ENCODE measurements at regions of chr1 and their contacts with region 1.

Region 1: DNA sequence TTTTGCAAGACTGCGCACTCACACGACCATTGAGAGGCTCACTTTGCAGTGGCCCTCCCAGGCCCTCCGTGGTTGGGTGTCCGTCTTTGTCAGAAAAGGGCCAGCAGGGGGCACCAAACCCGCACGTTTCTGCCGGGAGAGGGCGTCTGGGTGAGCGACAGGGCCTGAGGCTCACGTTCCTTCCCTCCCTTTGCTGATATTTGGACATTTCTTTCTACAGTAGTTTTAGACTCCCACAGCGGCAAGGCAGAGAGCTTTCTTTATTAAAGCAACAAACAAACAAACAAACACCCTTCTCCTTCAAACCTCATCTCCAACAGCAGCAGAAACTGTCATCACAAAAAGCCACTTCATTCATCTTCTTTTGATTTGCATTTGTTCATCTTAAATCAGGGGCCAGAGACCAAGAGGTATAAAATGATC is 79.2 kb upstream of the WDR26 start:
- DNase-seq: peak; percentile 86 to 94 (median 93)
- ATAC-seq: peak; percentile 93
- H3K4me3 ChIP-seq: no peak overlapping the region
- H3K27ac ChIP-seq: no peak overlapping the region
- H3K4me1 ChIP-seq: no peaks in the 10 kb centered on the region
- H3K27me3 ChIP-seq: no peaks in the 10 kb centered on the region

Region 2: GRCh38 chr1:224644553-224645154 is 130.9 kb after region 1 on chr1:
- intact Hi-C with region 1: loop called in 2 of 4 experiments (anchors 10 kb)
- DNase-seq: no peak
- ATAC-seq: peak; percentile 41 to 62
- H3K4me3 ChIP-seq: no peak overlapping the region
- H3K27ac ChIP-seq: no peak overlapping the region
- H3K4me1 ChIP-seq: no peaks in the 10 kb centered on the region
- H3K27me3 ChIP-seq: no peaks in the 10 kb centered on the region

Region 3: DNA sequence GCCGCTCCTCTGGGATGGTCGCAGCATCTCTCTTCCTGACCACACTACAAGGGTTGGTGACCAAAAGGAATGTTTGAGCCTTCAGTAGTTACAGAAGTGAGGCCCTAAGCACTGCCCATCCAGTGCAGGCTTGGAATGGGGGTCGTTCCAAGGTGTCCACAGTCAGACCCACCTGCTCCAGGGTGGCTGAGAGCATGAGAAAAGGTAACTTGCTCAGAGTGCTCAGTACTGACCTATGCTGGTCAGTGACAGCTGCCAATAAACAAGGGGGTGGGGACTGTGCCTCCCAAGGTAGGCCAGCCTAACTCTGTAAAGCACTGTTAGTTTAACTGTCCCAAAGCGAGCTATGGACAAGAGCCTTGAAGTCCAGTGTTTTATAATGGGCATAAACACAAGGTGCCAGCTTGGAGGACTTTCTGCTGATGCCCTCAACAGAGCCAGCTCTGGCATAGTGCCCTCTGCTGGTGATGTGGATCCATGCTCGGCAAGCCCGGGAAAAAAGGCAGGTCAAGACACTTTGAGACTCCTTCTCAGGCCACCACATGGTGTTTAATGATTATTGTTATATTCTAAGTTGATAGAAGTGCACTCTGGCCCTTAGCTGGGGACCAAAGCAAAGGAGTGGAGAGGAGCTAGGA is 337.5 kb after region 1 on chr1:
- intact Hi-C with region 1: loop called (anchors 2 to 5 kb)
- DNase-seq: peak; percentile 44 to 79 (median 72)
- ATAC-seq: peak; percentile 41 to 54
- H3K4me3 ChIP-seq: no peak overlapping the region
- H3K27ac ChIP-seq: no peak overlapping the region
- H3K4me1 ChIP-seq: no peaks in the 10 kb centered on the region
- H3K27me3 ChIP-seq: no peaks in the 10 kb centered on the region

Region 4: DNA sequence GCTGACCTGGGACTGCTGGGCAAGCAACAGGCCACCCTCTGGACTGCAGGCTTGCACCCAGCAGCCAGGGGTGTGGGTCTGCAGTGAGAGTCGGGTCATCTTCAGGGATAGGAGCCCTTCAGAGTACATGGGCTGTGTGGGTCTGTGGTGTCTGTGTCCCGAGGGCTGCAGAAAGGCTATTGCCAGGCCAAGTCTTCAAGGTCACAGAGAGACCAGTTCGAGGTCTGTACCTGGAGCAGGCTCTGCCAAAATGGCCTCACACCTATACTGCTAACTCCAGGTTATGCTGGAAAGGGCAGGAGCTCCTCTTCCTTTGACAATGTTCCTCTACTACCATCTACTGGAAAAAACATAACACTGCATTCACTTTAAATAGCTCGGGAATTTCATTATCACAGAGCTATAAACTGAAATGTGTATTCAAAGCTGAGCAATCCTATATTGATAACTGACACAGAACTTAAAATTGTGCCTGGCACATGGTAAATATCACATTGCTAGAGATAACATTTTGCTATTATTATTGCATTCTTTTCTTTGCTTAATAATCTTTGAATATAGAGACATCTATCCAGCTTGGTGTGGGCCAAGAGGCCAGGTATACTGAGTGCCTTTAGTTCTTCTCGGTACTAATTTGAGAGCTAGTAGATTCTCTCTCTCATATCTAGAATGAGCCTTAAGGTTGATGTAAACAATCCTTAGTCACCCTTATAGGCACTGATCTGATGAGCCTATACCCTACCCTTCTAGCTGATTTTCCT is 408.8 kb after region 1 on chr1:
- intact Hi-C with region 1: loop called in 3 of 4 experiments (anchors 5 kb)
- DNase-seq: no peak
- ATAC-seq: peak; percentile 49 to 55
- H3K4me3 ChIP-seq: no peak overlapping the region
- H3K27ac ChIP-seq: no peak overlapping the region
- H3K4me1 ChIP-seq: no peaks in the 10 kb centered on the region
- H3K27me3 ChIP-seq: no peaks in the 10 kb centered on the region